ENCODE measurements at regions of chr17 and their contacts with region 1.

Region 1: DNA sequence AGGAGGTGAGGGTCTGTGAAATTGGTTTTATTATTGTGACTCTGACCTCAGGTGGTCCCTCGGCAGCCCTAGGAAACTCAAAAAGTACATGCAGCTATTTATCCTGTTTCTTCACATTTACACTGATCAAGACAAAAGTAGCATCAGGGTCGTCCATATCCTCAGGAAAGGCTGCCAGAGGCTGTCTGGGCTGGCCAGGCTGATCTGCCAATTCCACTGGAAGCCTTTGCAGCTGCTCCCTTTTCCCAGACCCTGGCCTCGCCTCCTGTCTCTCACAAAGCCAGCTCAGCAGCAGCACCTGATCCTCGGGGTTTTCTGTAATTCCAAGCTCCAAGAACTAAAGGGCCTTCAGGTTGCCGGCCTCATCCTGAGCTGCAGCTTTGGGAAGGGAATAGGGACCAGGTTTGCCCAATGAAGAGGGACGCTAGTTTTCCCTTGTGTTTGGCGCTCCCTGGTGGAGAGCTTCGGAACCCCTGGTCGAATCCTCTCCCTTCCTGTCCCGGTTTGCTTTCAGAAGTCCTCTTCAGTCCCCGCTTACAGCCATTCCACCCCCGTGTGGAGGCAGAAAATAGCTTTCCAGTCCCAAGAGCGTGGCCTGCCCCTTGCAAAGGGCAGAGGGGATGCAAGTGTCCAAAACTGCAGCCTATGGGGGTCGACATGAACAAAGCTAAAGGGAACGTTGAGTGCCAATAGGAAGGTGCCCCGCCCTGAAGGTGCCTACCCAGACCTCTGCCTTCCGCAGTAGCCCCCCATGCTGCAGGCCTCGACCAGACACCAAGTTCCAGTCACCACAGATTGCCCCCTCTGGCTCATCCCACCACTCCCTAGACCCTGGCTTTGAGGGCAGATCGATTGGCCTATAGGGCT is 13.4 kb downstream of the MFSD6L start:
- H3K4me3 Mint-ChIP-seq: no peak overlapping the region
- H3K27ac Mint-ChIP-seq: peak overlapping the region; percentile 22
- H3K4me1 Mint-ChIP-seq: peaks cover 28% of the 10 kb centered on the region
- H3K27me3 Mint-ChIP-seq: no peaks in the 10 kb centered on the region

Region 2: GRCh38 chr17:8572764-8573163 is 213.0 kb before region 1 on chr17:
- intact Hi-C with region 1: loop called (anchors 10 kb)
- H3K4me3 Mint-ChIP-seq: no peak overlapping the region
- H3K27ac Mint-ChIP-seq: no peak overlapping the region
- H3K4me1 Mint-ChIP-seq: peaks cover 5% of the 10 kb centered on the region
- H3K27me3 Mint-ChIP-seq: peaks cover 6% of the 10 kb centered on the region